ENCODE measurements at regions of chr17 and their contacts with region 1.

Region 1: DNA sequence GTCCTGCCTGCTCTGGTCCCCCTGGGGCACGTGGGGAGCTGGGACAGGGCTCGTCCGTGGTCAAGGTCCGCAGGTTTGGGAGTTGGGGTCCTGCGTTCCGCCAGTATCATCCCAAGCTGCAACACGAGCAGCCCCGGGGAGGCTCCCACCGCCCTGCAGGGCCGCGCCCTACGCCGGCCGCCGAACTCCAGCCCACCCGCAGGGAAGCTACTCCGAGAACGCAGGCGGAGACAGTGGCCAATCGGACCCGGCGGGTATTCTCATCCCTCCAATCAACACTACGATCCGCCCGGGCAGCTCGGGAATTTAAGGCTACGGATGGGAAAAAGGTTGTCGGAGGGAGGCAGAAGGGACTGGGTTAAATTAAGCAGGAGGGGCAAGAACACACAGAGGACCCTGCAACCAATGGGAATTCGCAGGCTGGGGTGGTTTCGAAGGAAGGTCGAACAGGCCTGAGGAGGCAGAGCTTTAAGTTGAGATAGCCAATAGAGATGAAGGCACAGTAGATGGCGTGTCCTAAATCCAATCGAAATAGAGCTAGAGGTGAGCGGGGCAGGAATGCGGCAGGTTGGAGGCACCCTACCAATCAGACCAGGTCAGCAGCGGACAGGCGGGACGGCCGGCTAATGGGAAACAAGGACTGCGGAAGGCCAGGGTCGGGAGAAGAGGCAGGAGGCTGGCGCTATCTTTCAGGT is 626 bp downstream of the SPAG7 start:
- DNase-seq: peak in 9 of 10 donors; percentile 79 to 98 (median 94)
- ATAC-seq: peak; percentile 84 to 86
- H3K4me3 Mint-ChIP-seq: no peak overlapping the region
- H3K27ac Mint-ChIP-seq: peak overlapping the region in 3 of 10 donors; percentile 57 to 72 (median 61)
- H3K4me1 Mint-ChIP-seq: peaks cover 15 to 22% (median 21%) of the 10 kb centered on the region in 4 donors
- H3K27me3 Mint-ChIP-seq: no peaks in the 10 kb centered on the region

Region 2: DNA sequence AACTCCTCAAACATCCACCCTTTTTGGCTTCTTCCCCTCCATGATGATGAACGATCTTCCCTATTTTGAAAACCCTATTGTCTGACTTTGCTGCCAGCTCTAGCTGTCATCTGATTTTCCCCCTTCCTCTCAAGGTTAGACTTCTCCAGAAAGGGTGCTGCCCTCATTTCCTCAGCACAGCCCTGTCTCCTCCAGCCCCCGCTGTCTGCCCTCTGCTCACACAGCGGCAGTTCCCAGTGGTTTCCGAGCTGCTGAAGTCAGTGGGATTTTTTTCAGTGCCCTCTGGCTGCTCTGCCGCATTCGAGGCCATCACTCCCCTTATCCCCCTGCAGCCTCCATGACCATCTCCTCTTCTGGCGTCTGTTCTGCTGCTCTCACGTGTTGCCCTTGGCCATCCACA is 94.2 kb before region 1 on chr17:
- POLR2A ChIA-PET with region 1: no interaction called
- DNase-seq: no peak
- ATAC-seq: no peak
- H3K4me3 Mint-ChIP-seq: no peak overlapping the region
- H3K27ac Mint-ChIP-seq: no peak overlapping the region
- H3K4me1 Mint-ChIP-seq: peaks cover 0 to 15% (median 11%) of the 10 kb centered on the region in 4 donors
- H3K27me3 Mint-ChIP-seq: no peaks in the 10 kb centered on the region

Region 3: GRCh38 chr17:4903051-4903818 is 63.8 kb before region 1 on chr17 and contains the start of gene CHRNE:
- POLR2A ChIA-PET with region 1: interaction called, 44 read pairs
- DNase-seq: peak; percentile 51 to 88 (median 76)
- ATAC-seq: peak; percentile 26 to 27
- H3K4me3 Mint-ChIP-seq: peak within 1 kb of the TSS; percentile 40 to 86 (median 72)
- H3K27ac Mint-ChIP-seq: peak within 1 kb of the TSS; percentile 27 to 99 (median 84)
- H3K4me1 Mint-ChIP-seq: peaks cover 26 to 45% (median 41%) of the 10 kb centered on the region in 4 donors
- H3K27me3 Mint-ChIP-seq: peaks cover 0 to 2% (median 0%) of the 10 kb centered on the region in 5 donors
- polyA plus RNA-seq, gene CHRNE: 0.19 to 0.58 (median 0.20) TPM

Region 4: DNA sequence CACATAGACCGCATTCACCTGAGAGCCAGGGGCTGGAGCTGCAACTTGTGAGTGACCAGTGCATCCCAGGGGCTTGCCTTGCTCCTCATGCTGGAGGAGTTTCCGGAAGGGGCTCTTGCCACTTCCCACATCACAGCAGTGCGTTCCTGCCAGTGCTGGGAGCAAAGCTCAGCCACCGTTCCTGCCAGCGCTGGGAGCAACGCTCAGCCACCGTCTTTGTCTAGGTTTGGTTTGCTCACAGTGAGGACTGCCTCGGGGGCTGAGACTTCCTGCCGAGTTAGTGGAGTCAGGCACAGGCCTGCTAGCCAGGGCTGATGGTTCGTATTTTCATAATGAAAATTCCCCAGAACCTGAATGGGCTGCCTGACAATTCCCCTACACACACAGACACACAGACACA is 58.7 kb before region 1 on chr17:
- POLR2A ChIA-PET with region 1: interaction called, 44 read pairs
- DNase-seq: peak in 1 of 10 donors; percentile 25
- ATAC-seq: peak in 1 of 2 donors; percentile 26
- H3K4me3 Mint-ChIP-seq: no peak overlapping the region
- H3K27ac Mint-ChIP-seq: no peak overlapping the region
- H3K4me1 Mint-ChIP-seq: peaks cover 3 to 10% (median 5%) of the 10 kb centered on the region in 4 donors
- H3K27me3 Mint-ChIP-seq: no peaks in the 10 kb centered on the region

Region 5: DNA sequence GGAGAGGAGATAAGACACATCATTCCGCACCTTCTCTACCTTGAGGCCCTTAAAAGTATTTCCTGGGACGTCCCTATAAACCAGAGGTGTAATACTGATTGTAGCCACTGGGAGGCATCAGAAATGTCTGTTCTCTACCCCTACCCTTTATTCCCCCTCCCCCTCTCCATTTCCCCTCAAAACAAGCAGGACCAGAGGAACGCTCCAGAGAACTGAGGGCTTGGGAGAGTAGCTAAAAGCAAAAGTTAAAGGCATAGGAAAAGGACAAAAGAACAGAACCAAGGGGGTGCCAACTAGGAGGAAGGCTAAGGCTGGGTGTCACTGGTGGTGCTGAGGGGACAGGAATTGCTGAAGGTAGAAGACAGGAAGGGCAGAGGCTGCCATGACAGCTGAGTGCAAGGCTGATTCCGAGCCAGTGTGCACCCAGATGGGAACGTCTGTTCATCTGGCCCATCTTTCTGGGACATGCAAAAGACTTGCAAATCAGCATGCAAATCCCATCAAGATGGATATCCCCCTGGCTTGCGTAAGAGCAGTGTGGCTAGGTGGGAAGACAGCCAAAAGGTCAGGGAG is 13.7 kb after region 1 on chr17:
- POLR2A ChIA-PET with region 1: interaction called, 42 read pairs
- DNase-seq: peak in 8 of 10 donors; percentile 33 to 74 (median 62)
- ATAC-seq: peak; percentile 84 to 87
- H3K4me3 Mint-ChIP-seq: peak overlapping the region in 6 of 10 donors; percentile 6 to 80 (median 33)
- H3K27ac Mint-ChIP-seq: peak overlapping the region; percentile 23 to 92 (median 82)
- H3K4me1 Mint-ChIP-seq: peaks cover 18 to 38% (median 25%) of the 10 kb centered on the region in 4 donors
- H3K27me3 Mint-ChIP-seq: no peaks in the 10 kb centered on the region

Region 6: DNA sequence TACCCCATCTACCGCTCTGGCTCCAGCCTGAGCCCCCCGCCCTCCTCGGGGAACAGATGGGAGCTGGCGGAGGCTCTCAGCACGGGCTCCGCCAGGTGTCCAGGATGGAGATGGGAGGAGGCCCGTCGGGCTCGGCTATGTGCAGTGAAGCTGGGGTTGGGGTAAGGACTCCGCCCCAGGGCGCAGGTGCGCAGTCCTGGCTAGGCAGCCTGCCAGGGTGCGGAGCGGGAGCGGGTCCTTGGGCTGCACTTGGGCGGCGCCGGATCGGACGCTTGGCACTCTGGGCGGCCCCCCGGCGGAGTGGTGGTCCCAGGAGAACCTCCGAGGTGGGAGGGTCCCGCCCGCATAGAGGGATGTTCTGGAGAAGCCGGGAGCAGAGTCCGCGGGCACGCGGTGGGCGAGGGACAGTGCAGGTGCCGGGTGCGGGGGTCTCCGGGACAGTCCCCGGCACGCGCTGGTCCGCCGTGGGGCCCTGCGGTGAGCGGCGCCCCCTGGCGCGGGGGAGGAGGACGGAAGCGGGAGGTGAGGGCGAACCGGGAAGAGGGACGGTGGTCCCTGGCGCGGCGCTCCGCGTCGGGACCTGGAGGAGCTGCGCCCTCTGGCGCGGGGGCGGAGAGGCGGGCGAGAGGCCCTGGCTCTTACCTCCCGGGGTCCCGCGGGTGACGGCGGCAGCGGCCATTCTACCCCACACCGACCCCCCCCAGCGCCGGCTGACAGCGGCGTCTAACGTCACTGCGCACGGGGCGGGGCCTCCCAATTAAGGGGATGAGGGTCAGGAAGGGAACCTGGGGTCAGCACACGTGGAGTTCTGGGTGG is 20.2 kb after region 1 on chr17 and contains the start of gene CAMTA2:
- POLR2A ChIA-PET with region 1: interaction called, 42 read pairs
- DNase-seq: peak; percentile 81 to 93 (median 84)
- ATAC-seq: peak; percentile 89
- H3K4me3 Mint-ChIP-seq: peak within 1 kb of the TSS; percentile 83 to 97 (median 91)
- H3K27ac Mint-ChIP-seq: peak within 1 kb of the TSS; percentile 85 to 97 (median 95)
- H3K4me1 Mint-ChIP-seq: peaks cover 30 to 49% (median 42%) of the 10 kb centered on the region in 4 donors
- H3K27me3 Mint-ChIP-seq: no peaks in the 10 kb centered on the region
- polyA plus RNA-seq, gene CAMTA2: 4.1 to 18.9 (median 6.3) TPM

Region 7: GRCh38 chr17:4997302-4998026 is 30.5 kb after region 1 on chr17 and contains the starts of genes INCA1 and KIF1C:
- POLR2A ChIA-PET with region 1: interaction called, 26 read pairs
- DNase-seq: peak; percentile 82 to 96 (median 90)
- ATAC-seq: peak; percentile 91 to 95
- H3K4me3 Mint-ChIP-seq: peak within 1 kb of the TSS; percentile 76 to 91 (median 84)
- H3K27ac Mint-ChIP-seq: peak within 1 kb of the TSS; percentile 66 to 95 (median 86)
- H3K4me1 Mint-ChIP-seq: peaks cover 17 to 29% (median 20%) of the 10 kb centered on the region in 4 donors
- H3K27me3 Mint-ChIP-seq: no peaks in the 10 kb centered on the region
- polyA plus RNA-seq, gene INCA1: 0.23 TPM in 1 of 3 donors, not detected in the others
- polyA plus RNA-seq, gene KIF1C: 2.6 to 3.0 (median 3.0) TPM

Region 8: GRCh38 chr17:5065227-5065744 is 98.3 kb after region 1 on chr17:
- POLR2A ChIA-PET with region 1: no interaction called
- DNase-seq: no peak
- ATAC-seq: no peak
- H3K4me3 Mint-ChIP-seq: no peak overlapping the region
- H3K27ac Mint-ChIP-seq: no peak overlapping the region
- H3K4me1 Mint-ChIP-seq: peaks cover 0 to 7% (median 1%) of the 10 kb centered on the region in 4 donors
- H3K27me3 Mint-ChIP-seq: peaks cover 0 to 7% (median 2%) of the 10 kb centered on the region in 5 donors